Heart right ventricle (tissue), 16 donors: ENCODE measurements at regions of chr4 and their contacts with region 1.

Region 1: DNA sequence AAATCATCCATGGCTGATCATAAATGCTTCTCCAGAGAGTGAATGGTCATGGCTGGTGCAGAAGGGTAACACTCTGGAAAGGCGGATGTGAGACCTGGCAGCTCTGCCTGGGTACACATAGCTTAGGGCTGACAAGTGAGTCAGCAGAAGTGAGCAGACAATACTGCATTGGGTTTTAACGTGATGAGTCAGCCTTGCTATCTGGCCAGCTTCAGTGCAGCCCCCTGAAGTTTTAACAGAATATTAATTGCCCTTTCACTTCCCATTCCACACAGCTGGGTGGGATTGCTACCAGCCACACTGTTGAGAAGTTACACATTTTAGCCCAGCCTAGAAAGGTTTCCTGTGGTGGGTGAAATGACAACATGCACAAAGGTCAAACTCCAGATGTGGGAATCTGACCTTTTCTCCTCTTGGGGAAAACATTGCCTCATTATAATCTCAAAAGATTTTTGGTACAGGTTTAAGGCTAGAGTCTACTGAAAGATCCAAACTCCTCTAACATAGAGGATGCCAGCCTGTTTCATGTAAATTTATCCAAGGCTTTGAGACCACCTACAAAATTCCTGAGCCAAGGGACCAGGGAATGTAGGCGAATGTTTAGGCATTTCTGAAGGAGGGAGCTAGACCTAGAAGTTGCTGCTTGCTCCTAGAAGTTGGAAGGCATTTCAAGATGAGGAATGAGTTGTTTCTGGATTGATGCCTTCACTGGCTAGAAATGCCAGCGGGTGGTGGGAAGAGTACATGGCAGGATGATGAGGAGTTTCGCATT is 230.3 kb upstream of the PGRMC2 start:
- DNase-seq: peak; percentile 38 to 54
- ATAC-seq: peak; percentile 59 to 94 (median 84)
- H3K4me3 ChIP-seq: no peak overlapping the region
- H3K27ac ChIP-seq: peak overlapping the region in 8 of 10 donors; percentile 26 to 75 (median 57)
- H3K4me1 ChIP-seq: peaks cover 8 to 49% (median 38%) of the 10 kb centered on the region in 9 donors
- H3K27me3 ChIP-seq: no peaks in the 10 kb centered on the region
- CTCF ChIP-seq: no peak

Region 2: GRCh38 chr4:128468123-128468989 is 49.6 kb before region 1 on chr4:
- intact Hi-C with region 1: loop called in 3 of 10 experiments (anchors 5 to 10 kb)
- DNase-seq: peak in 1 of 2 donors; percentile 66
- ATAC-seq: peak; percentile 77 to 91 (median 82)
- H3K4me3 ChIP-seq: peak overlapping the region in 1 of 10 donors; percentile 1
- H3K27ac ChIP-seq: peak overlapping the region in 7 of 10 donors; percentile 7 to 67 (median 39)
- H3K4me1 ChIP-seq: peaks cover 0 to 25% (median 9%) of the 10 kb centered on the region in 9 donors
- H3K27me3 ChIP-seq: no peaks in the 10 kb centered on the region
- CTCF ChIP-seq: no peak

Region 3: DNA sequence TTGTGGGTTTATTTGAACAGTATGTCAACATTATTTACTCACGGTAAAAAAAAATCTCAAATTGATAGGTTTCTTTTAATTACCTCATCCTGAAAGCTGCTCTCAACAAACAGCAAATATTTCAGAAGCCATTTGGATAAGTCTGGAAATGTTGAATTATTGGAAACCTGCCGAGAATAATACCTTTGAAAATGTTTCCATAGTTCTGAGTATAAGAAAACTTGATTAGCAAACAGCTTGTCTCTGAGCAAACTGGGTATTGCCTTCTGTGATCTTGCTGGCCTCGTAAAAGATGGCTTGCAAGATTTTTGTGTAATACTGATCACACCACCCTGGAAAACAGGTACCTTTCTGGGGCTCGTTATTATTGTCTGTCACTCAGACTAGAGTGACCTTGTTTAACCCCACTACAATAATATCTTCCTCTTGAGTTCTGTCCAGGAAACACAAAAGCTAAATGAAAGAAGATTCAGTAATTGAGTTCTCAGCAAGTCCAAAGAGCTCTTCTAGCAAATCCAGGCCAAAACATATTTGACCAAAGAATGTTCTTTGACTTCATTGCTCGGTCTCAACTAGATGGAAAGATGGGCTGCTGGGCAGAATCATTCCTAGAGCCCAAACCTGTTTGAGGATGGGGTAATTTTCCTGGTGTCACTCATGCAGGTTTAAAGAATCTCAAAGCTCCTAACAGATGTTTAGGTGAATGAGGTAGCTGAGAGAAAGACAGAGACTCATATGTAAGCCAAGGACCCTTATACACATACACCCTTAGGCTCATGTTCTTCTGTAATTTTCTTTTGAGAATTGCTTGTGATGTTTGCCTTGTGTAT is 36.0 kb after region 1 on chr4:
- intact Hi-C with region 1: loop called in 1 of 10 experiments (anchors 5 kb)
- DNase-seq: no peak
- ATAC-seq: peak in 5 of 8 donors; percentile 23 to 54 (median 31)
- H3K4me3 ChIP-seq: peak overlapping the region; percentile 12 to 74 (median 60)
- H3K27ac ChIP-seq: peak overlapping the region; percentile 73 to 97 (median 91)
- H3K4me1 ChIP-seq: peaks cover 0 to 20% (median 13%) of the 10 kb centered on the region in 9 donors
- H3K27me3 ChIP-seq: no peaks in the 10 kb centered on the region
- CTCF ChIP-seq: no peak

Region 4: DNA sequence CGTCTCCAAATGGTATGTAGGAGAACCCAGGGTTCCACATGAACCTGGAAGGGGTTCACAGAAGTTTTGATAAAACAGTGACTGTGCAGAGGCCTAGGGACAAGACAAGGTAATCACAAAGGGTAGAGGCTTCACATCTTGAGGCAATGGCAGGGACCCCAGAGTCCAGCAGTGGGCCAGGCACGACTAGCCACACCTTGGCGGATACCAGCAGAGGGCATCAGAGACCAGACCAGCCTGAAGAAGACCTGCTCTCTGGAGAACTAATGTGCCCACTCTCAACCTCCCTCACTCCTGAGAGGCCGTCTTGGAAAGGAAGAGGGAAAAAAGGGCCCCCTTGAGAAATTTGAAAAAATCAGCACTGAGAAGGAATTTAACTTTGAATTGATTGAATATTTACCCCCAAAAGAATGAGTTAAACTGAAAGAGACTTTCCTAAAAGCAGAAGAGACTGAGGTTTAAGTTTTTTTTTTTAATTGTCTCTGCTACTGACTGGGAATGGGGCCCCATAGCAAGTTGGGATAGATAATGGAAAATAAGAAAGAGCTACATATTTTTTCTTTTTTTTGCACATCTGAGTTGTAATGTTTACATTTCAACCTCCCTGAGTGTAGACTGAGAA is 47.8 kb after region 1 on chr4:
- intact Hi-C with region 1: no loop called
- DNase-seq: peak in 1 of 2 donors; percentile 39
- ATAC-seq: peak; percentile 50 to 80 (median 77)
- H3K4me3 ChIP-seq: no peak overlapping the region
- H3K27ac ChIP-seq: no peak overlapping the region
- H3K4me1 ChIP-seq: peaks cover 0 to 21% (median 4%) of the 10 kb centered on the region in 9 donors
- H3K27me3 ChIP-seq: no peaks in the 10 kb centered on the region
- CTCF ChIP-seq: peak; percentile 25 to 66 (median 61)

Region 5: GRCh38 chr4:128670513-128670912 is 152.6 kb after region 1 on chr4:
- intact Hi-C with region 1: no loop called
- DNase-seq: no peak
- ATAC-seq: no peak
- H3K4me3 ChIP-seq: no peak overlapping the region
- H3K27ac ChIP-seq: no peak overlapping the region
- H3K4me1 ChIP-seq: peaks cover 0 to 10% (median 0%) of the 10 kb centered on the region in 9 donors
- H3K27me3 ChIP-seq: no peaks in the 10 kb centered on the region
- CTCF ChIP-seq: no peak